Posterior vena cava (tissue), 2 donors: ENCODE measurements at regions of chr21 and their contacts with region 1.

Region 1: GRCh38 chr21:36817732-36818450 is 119.0 kb downstream of the SIM2 start:
- DNase-seq: no peak

Region 2: DNA sequence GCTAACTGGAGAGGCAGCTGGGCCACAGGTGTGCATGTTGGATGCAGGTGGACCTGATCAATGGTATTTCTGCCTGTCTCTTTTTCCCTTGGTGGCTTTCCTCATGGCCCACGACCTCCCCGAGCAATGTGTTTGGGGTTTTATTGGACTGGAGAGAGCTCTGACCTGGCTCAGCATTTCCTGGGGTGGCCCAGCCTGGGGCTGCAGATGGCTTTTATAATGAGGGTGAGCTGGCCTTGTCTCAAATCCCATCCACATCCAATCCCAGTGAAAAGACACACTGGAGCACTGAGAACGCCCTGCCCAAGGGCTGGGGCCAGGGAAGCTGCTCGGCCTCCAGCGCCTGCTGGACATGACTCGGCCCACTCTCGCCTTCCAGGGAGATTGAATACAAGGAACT is 74.9 kb before region 1 on chr21:
- intact Hi-C with region 1: loop called in 1 of 2 experiments (anchors 2 kb)
- DNase-seq: peak; percentile 19